ENCODE measurements at regions of chr6 and their contacts with region 1.

Region 1: DNA sequence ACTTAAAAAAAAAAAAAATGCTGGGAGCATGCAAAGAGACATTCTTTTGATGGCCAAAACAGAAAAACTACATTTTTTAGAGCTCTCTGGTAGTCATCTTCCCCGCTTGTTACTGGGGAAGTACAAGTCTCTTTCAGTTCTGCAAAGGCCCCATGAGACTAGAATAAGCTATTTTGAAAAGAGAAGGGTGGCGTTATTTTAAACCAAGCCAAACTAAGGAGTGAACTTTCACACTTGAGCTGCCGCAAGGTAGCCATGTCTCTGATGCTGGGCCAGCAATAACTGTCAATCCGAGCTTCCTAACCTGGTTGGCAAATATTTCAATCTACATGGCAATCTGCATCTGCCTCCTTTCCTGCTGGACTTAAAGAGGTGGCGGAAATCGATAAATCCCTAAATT is 96.7 kb downstream of the L3MBTL3 start:
- DNase-seq: peak; percentile 54
- ATAC-seq: peak; percentile 97
- H3K4me3 ChIP-seq: 0 out of 2 replicates have a peak overlapping the region, but pooled peaks have one; percentile 15
- H3K27ac ChIP-seq: peak overlapping the region; percentile 22
- H3K4me1 ChIP-seq: peaks cover 16% of the 10 kb centered on the region
- H3K27me3 ChIP-seq: no peaks in the 10 kb centered on the region
- CTCF ChIP-seq: no peak
- EP300 ChIP-seq: no peak; a peak in 1 of 4 replicates
- POLR2A ChIP-seq: no peak
- RAD21 ChIP-seq: no peak

Region 2: GRCh38 chr6:130132286-130132701 is 17.3 kb after region 1 on chr6:
- CTCF ChIA-PET with region 1: interaction called, 4 read pairs
- POLR2A ChIA-PET with region 1: no interaction called
- RAD21 ChIA-PET with region 1: interaction called, 3 read pairs
- SMC1A ChIA-PET with region 1: interaction called, 27 read pairs
- in situ Hi-C with region 1: no loop called
- intact Hi-C with region 1: no loop called
- DNase-seq: no peak
- ATAC-seq: peak; percentile 95
- H3K4me3 ChIP-seq: no peak overlapping the region
- H3K27ac ChIP-seq: no peak overlapping the region; the same call in 1 of the 2 replicates
- H3K4me1 ChIP-seq: peaks cover 6% of the 10 kb centered on the region; the same call in 1 of the 2 replicates
- H3K27me3 ChIP-seq: no peaks in the 10 kb centered on the region
- CTCF ChIP-seq: no peak
- EP300 ChIP-seq: no peak
- POLR2A ChIP-seq: no peak
- RAD21 ChIP-seq: no peak

Region 3: GRCh38 chr6:130337534-130337933 is 222.5 kb after region 1 on chr6:
- CTCF ChIA-PET with region 1: no interaction called
- POLR2A ChIA-PET with region 1: no interaction called
- RAD21 ChIA-PET with region 1: no interaction called
- SMC1A ChIA-PET with region 1: no interaction called
- in situ Hi-C with region 1: no loop called
- intact Hi-C with region 1: no loop called
- DNase-seq: no peak
- ATAC-seq: no peak
- H3K4me3 ChIP-seq: no peak overlapping the region
- H3K27ac ChIP-seq: no peak overlapping the region
- H3K4me1 ChIP-seq: no peaks in the 10 kb centered on the region
- H3K27me3 ChIP-seq: no peaks in the 10 kb centered on the region
- CTCF ChIP-seq: no peak
- EP300 ChIP-seq: no peak
- POLR2A ChIP-seq: no peak
- RAD21 ChIP-seq: no peak

Measured in GM12878 (cell line).